Right lobe of liver (tissue), 6 donors: ENCODE measurements at regions of chr10 and their contacts with region 1.

Region 1: GRCh38 chr10:25113191-25114035 is 61.4 kb upstream of the GPR158 start:
- DNase-seq: peak; percentile 74 to 82 (median 79)
- ATAC-seq: peak; percentile 96 to 98 (median 97)
- H3K4me3 ChIP-seq: no peak overlapping the region
- H3K27ac ChIP-seq: no peak overlapping the region
- H3K4me1 ChIP-seq: no peaks in the 10 kb centered on the region
- H3K27me3 ChIP-seq: no peaks in the 10 kb centered on the region
- CTCF ChIP-seq: peak; percentile 59 to 80 (median 79)
- POLR2A ChIP-seq: no peak

Region 2: GRCh38 chr10:25226775-25227682 is 113.6 kb after region 1 on chr10:
- intact Hi-C with region 1: loop called (anchors 10 kb)
- DNase-seq: peak in 2 of 3 donors; percentile 23 to 57
- ATAC-seq: peak; percentile 88 to 91 (median 89)
- H3K4me3 ChIP-seq: no peak overlapping the region
- H3K27ac ChIP-seq: no peak overlapping the region
- H3K4me1 ChIP-seq: no peaks in the 10 kb centered on the region
- H3K27me3 ChIP-seq: no peaks in the 10 kb centered on the region
- CTCF ChIP-seq: peak; percentile 58 to 83 (median 77)
- POLR2A ChIP-seq: no peak

Region 3: GRCh38 chr10:25465582-25466372 is 352.4 kb after region 1 on chr10:
- intact Hi-C with region 1: no loop called
- DNase-seq: no peak
- ATAC-seq: no peak
- H3K4me3 ChIP-seq: no peak overlapping the region
- H3K27ac ChIP-seq: no peak overlapping the region
- H3K4me1 ChIP-seq: no peaks in the 10 kb centered on the region
- H3K27me3 ChIP-seq: no peaks in the 10 kb centered on the region
- CTCF ChIP-seq: no peak
- POLR2A ChIP-seq: no peak